Caco-2 (cell line): ENCODE measurements at regions of chr15 and their contacts with region 1.

Region 1: DNA sequence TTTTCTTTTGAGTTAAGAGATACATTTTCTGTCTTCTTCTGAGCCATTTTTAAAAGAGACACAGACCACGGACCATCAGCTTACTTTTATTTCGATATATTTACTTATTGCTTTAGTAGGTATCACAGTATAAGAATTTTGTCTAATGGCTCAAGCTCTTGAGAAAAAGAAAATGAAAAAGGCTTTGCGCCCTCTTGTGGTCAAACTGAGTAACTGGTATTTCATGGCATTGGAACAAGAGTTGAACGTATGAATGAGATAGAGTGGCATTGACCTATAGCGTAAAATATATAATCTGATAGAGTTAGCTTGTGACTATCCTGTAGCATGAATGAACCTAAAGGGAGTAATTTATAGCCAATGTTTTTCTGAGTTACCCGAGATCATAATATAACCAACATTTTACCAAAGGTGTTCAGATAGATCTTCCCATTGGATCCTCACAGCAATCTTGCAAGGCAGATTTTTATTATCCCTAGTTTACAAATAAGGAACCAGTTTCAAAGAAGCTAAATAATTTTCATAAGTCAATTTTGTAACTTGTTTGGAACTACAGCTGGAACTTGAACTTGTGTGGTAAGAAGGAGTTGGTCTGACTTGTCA is 154.6 kb downstream of the POLR2M start:
- DNase-seq: peak in 1 of 2 experiments; percentile 50
- H3K4me3 ChIP-seq: no peak overlapping the region
- H3K4me3 Mint-ChIP-seq: no peak overlapping the region
- H3K27ac Mint-ChIP-seq: no peak overlapping the region
- H3K4me1 ChIP-seq: no peaks in the 10 kb centered on the region
- H3K4me1 Mint-ChIP-seq: no peaks in the 10 kb centered on the region
- H3K27me3 ChIP-seq: no peaks in the 10 kb centered on the region
- H3K27me3 Mint-ChIP-seq: peaks cover 27% of the 10 kb centered on the region
- CTCF ChIP-seq: peak; percentile 44 to 55

Region 2: GRCh38 chr15:57667171-57667849 is 193.8 kb before region 1 on chr15:
- CTCF ChIA-PET with region 1: interaction called, 3 read pairs
- POLR2A ChIA-PET with region 1: no interaction called
- intact Hi-C with region 1: loop called (anchors 1 kb)
- DNase-seq: peak; percentile 47 to 65
- H3K4me3 ChIP-seq: peak overlapping the region; percentile 24
- H3K4me3 Mint-ChIP-seq: peak overlapping the region; percentile 41
- H3K27ac Mint-ChIP-seq: no peak overlapping the region
- H3K4me1 ChIP-seq: peaks cover 20% of the 10 kb centered on the region
- H3K4me1 Mint-ChIP-seq: peaks cover 9% of the 10 kb centered on the region
- H3K27me3 ChIP-seq: no peaks in the 10 kb centered on the region
- H3K27me3 Mint-ChIP-seq: no peaks in the 10 kb centered on the region
- CTCF ChIP-seq: peak; percentile 46 to 54

Region 3: DNA sequence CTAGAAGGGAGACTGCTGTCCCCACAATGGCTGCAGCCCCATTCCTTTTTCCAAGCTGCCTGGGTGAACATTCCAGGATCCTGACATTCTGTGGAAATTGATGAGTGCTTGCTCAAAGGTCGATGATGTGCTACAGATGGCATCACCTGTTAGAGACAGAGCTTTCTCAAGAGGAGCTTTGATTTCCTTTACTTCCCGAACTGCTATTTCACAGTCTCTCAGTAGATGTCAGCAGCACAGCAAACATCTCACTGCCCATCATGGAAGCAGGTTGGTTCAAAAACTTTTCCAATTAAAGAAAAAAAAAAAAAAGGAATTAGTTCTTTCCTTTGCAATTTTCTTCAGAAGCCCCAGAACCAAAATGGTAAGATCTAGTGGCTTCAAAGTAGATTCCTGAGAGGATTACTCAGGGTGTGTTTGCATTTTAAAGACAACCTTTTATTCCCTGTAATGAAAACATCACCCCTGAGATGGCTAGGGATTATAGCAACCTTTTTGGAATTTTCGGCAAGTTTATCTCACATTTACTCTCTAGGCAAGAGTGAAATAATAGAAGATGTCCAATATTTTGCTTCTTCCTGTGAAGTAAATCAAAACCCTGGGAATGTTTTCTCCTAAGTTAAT is 109.8 kb before region 1 on chr15:
- CTCF ChIA-PET with region 1: interaction called, 72 read pairs
- POLR2A ChIA-PET with region 1: interaction called, 3 read pairs
- intact Hi-C with region 1: loop called (anchors 1 kb)
- DNase-seq: peak in 1 of 2 experiments; percentile 29
- H3K4me3 ChIP-seq: no peak overlapping the region
- H3K4me3 Mint-ChIP-seq: no peak overlapping the region
- H3K27ac Mint-ChIP-seq: no peak overlapping the region
- H3K4me1 ChIP-seq: no peaks in the 10 kb centered on the region
- H3K4me1 Mint-ChIP-seq: no peaks in the 10 kb centered on the region
- H3K27me3 ChIP-seq: no peaks in the 10 kb centered on the region
- H3K27me3 Mint-ChIP-seq: no peaks in the 10 kb centered on the region
- CTCF ChIP-seq: peak; percentile 51 to 62

Region 4: DNA sequence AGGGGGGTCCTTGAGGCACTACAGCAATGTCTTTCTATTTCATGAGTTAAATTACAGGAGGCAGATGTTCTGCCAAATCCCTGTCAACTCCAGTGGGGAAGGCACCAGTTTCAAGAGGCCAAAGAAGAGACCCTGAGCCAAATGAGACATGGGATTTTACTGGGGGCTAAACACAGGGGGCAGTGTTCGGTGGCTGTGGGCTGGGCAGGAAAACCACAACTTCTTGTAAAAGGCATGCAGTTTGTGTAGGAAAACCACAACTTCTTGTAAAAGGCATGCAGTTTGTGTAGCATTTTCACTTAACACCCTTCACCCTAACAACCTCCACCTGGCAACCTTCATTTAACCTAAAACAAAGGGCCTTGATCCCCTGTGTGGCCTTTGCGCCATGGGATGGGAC is 93.7 kb before region 1 on chr15:
- CTCF ChIA-PET with region 1: interaction called, 10 read pairs
- POLR2A ChIA-PET with region 1: no interaction called
- intact Hi-C with region 1: no loop called
- DNase-seq: no peak
- H3K4me3 ChIP-seq: no peak overlapping the region
- H3K4me3 Mint-ChIP-seq: no peak overlapping the region
- H3K27ac Mint-ChIP-seq: no peak overlapping the region
- H3K4me1 ChIP-seq: no peaks in the 10 kb centered on the region
- H3K4me1 Mint-ChIP-seq: no peaks in the 10 kb centered on the region
- H3K27me3 ChIP-seq: no peaks in the 10 kb centered on the region; the same call in 1 of the 2 replicates
- H3K27me3 Mint-ChIP-seq: peaks cover 8% of the 10 kb centered on the region
- CTCF ChIP-seq: no peak

Region 5: GRCh38 chr15:57878573-57878972 is 17.4 kb after region 1 on chr15:
- CTCF ChIA-PET with region 1: no interaction called
- POLR2A ChIA-PET with region 1: no interaction called
- intact Hi-C with region 1: no loop called
- DNase-seq: no peak
- H3K4me3 ChIP-seq: no peak overlapping the region
- H3K4me3 Mint-ChIP-seq: no peak overlapping the region
- H3K27ac Mint-ChIP-seq: no peak overlapping the region
- H3K4me1 ChIP-seq: no peaks in the 10 kb centered on the region
- H3K4me1 Mint-ChIP-seq: no peaks in the 10 kb centered on the region
- H3K27me3 ChIP-seq: no peaks in the 10 kb centered on the region
- H3K27me3 Mint-ChIP-seq: peaks cover 21% of the 10 kb centered on the region
- CTCF ChIP-seq: no peak